Activated CD8-positive, alpha-beta T cell treated with anti-CD3 and anti-CD28 coated beads for 36 hours (primary cell): ENCODE measurements at regions of chr11 and their contacts with region 1.

Region 1: GRCh38 chr11:116879800-116880625 is 42.6 kb upstream of the APOA1 start:
- DNase-seq: peak; percentile 34
- ATAC-seq: peak; percentile 77
- H3K4me3 Mint-ChIP-seq: no peak overlapping the region
- H3K27ac Mint-ChIP-seq: no peak overlapping the region
- H3K4me1 Mint-ChIP-seq: peaks cover 19% of the 10 kb centered on the region
- H3K27me3 Mint-ChIP-seq: no peaks in the 10 kb centered on the region
- CTCF ChIP-seq: peak; percentile 71

Region 2: DNA sequence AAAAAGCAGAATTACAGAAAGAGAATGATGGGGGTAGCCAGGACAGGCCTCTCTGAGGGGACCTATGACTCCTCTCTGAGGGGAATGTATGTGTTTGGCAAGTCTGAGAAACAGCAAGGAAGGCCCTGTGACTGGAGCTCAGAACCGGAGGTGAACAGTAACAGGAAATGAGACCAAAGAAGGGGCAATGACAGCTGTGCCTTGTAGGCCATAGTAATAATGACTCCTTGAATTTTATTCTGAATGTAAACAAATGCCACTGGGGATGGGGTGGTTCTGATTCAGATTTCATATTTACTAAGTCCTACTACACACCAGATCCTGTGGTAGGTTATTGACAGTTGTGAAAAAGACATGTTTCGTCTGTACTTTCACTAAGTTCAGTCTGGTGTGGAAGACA is 10.2 kb after region 1 on chr11:
- CTCF ChIA-PET with region 1: interaction called, 31 read pairs
- POLR2A ChIA-PET with region 1: no interaction called
- intact Hi-C with region 1: no loop called
- DNase-seq: peak; percentile 40
- ATAC-seq: peak; percentile 90
- H3K4me3 Mint-ChIP-seq: no peak overlapping the region
- H3K27ac Mint-ChIP-seq: peak overlapping the region; percentile 44
- H3K4me1 Mint-ChIP-seq: peaks cover 13% of the 10 kb centered on the region
- H3K27me3 Mint-ChIP-seq: no peaks in the 10 kb centered on the region
- CTCF ChIP-seq: no peak

Region 3: GRCh38 chr11:116916052-116916451 is 36.0 kb after region 1 on chr11:
- CTCF ChIA-PET with region 1: interaction called, 10 read pairs
- POLR2A ChIA-PET with region 1: interaction called, 4 read pairs
- intact Hi-C with region 1: no loop called
- DNase-seq: no peak
- ATAC-seq: no peak
- H3K4me3 Mint-ChIP-seq: no peak overlapping the region
- H3K27ac Mint-ChIP-seq: no peak overlapping the region
- H3K4me1 Mint-ChIP-seq: peaks cover 11% of the 10 kb centered on the region
- H3K27me3 Mint-ChIP-seq: no peaks in the 10 kb centered on the region
- CTCF ChIP-seq: no peak

Region 4: DNA sequence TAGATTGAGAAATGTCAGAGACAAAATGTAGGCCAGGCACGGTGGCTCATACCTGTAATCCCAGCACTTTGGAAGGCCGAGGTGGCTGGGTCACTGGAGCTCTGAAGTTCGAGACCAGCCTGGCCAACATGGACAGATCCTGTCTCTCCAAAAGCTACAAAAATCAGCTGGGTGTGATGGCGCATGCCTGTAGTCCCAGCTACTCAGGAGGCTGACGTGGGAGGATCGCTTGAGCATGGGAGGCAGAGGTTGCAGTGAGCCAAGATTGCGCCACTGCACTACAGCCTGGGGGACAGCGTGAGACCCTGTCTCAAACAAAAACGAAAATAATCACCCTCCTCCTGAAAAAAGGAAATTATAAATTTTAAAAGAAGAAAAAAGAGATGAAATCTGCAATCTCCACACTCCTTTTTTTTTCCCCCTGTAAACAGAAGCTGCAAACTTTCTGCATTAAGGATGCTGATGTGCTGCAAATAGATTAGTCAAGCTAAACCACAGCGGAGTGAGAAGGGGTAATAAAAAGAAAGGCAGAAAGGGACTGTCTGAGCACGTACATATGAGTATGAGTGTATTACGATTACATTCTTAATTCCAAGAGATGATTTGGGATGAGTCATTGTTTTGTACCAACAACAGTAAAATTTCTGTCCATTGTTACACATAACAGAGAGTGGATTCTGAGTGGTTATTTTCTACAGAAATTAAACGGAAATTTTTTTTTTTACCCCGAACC is 131.0 kb after region 1 on chr11:
- CTCF ChIA-PET with region 1: no interaction called
- POLR2A ChIA-PET with region 1: no interaction called
- intact Hi-C with region 1: no loop called
- DNase-seq: no peak
- ATAC-seq: peak; percentile 87
- H3K4me3 Mint-ChIP-seq: no peak overlapping the region
- H3K27ac Mint-ChIP-seq: peak overlapping the region; percentile 55
- H3K4me1 Mint-ChIP-seq: peaks cover 40% of the 10 kb centered on the region
- H3K27me3 Mint-ChIP-seq: no peaks in the 10 kb centered on the region
- CTCF ChIP-seq: no peak